ENCODE measurements at regions of chr18 and their contacts with region 1.

Region 1: DNA sequence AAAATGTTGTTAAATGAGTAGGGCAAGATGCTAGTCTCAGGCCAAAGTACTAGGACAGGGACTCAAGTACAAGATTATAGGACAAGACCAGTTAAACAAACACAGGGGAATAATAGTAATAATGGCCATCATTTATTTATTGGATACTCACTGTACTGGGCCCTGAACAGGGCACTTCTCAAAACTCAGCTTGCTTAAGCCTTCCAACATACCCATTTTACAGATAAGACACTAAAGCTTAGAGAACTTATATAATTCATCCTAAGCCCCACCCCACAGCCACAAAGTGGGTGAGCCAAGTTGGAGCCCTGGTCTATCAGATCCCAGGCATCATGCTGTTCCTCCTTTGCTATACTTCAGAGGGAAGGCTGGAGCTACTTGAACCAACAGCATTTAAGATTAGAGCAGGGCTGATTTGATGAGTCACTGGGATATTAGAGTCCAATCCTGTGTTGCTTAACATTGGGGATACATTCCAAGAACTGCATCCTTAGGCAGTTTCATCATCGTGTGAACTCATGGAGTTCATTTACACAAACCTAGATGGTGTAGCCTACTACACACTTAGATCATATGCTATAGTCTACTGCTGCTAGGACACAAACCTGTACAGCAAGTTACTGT is 153.6 kb downstream of the MTCL1 start:
- DNase-seq: peak; percentile 19 to 92
- H3K4me3 ChIP-seq: no peak overlapping the region
- H3K27ac ChIP-seq: peak overlapping the region; percentile 45
- H3K4me1 ChIP-seq: peaks cover 37% of the 10 kb centered on the region
- H3K27me3 ChIP-seq: no peaks in the 10 kb centered on the region
- CTCF ChIP-seq: no peak

Region 2: GRCh38 chr18:8367217-8367988 is 491.6 kb before region 1 on chr18:
- CTCF ChIA-PET with region 1: no interaction called
- POLR2A ChIA-PET with region 1: no interaction called
- intact Hi-C with region 1: no loop called
- DNase-seq: peak in 1 of 2 experiments; percentile 35
- H3K4me3 ChIP-seq: no peak overlapping the region; the same call in 1 of the 2 replicates
- H3K27ac ChIP-seq: no peak overlapping the region
- H3K4me1 ChIP-seq: no peaks in the 10 kb centered on the region
- H3K27me3 ChIP-seq: no peaks in the 10 kb centered on the region
- CTCF ChIP-seq: peak; percentile 21; the same call in 1 of the 2 replicates

Region 3: DNA sequence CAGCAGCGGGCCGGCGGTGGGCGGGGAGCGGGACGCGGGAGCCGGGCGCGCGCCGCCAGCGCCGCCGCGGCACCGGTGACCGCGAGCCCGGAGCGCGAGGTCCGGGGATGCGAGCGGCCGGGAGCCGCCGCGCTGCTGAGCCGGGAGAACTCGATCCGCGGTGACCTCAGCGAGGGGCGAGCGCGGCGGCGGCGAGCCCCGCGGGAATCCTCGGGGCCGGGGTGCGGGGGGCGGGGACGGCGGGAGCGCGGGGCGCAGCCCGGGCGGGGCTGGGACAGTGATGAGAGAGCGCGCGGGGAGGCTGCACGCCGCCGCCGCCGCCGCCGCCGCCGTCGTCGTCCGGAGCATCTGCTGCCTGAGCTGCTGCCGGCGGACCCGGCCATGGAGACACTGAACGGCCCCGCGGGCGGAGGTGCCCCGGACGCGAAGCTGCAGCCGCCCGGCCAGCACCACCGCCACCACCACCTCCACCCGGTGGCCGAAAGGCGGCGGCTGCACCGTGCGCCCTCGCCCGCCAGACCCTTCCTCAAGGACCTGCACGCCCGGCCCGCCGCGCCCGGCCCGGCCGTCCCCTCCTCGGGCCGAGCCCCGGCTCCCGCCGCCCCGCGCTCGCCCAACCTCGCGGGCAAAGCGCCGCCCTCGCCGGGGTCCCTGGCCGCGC is 153.6 kb before region 1 on chr18 and contains the start of gene MTCL1:
- CTCF ChIA-PET with region 1: no interaction called
- POLR2A ChIA-PET with region 1: no interaction called
- intact Hi-C with region 1: no loop called
- DNase-seq: peak; percentile 38 to 70
- H3K4me3 ChIP-seq: peak within 1 kb of the TSS; percentile 76
- H3K27ac ChIP-seq: peak within 1 kb of the TSS; percentile 51
- H3K4me1 ChIP-seq: peaks cover 21% of the 10 kb centered on the region
- H3K27me3 ChIP-seq: no peaks in the 10 kb centered on the region
- CTCF ChIP-seq: no peak
- total RNA-seq, gene MTCL1: 29.6 and 30.0 TPM in 2 replicates

Region 4: GRCh38 chr18:8844721-8845148 is 14.3 kb before region 1 on chr18:
- CTCF ChIA-PET with region 1: no interaction called
- POLR2A ChIA-PET with region 1: interaction called, 24 read pairs
- intact Hi-C with region 1: no loop called
- DNase-seq: no peak
- H3K4me3 ChIP-seq: no peak overlapping the region
- H3K27ac ChIP-seq: no peak overlapping the region
- H3K4me1 ChIP-seq: peaks cover 5% of the 10 kb centered on the region; the same call in 1 of the 2 replicates
- H3K27me3 ChIP-seq: no peaks in the 10 kb centered on the region
- CTCF ChIP-seq: no peak

Region 5: DNA sequence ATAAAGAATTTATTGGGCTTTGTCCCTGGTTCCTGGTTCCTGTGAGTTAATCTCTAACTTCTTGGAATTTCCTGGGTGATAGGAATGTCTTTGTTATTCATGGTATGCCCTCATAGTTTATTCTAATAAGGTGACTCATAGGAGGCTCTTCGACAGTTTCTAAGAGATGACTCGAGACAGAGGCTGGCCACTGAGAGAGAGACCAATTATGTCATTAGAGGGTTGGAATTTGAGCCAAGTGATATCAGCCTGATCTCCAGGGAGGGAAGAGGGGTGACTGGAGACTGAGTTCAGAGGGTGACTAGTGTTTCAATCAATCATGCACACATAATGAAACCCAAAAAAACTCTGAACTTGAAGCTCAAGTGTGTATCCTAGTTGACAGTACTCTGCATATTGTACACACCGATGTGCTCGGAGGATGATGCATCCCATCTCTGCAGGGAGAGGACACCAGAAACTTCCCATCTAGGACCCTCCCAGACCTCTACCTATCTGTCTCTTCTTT is 32.0 kb after region 1 on chr18:
- CTCF ChIA-PET with region 1: no interaction called
- POLR2A ChIA-PET with region 1: no interaction called
- intact Hi-C with region 1: loop called (anchors 1 kb)
- DNase-seq: peak; percentile 79 to 99
- H3K4me3 ChIP-seq: no peak overlapping the region
- H3K27ac ChIP-seq: peak overlapping the region; percentile 51
- H3K4me1 ChIP-seq: peaks cover 17% of the 10 kb centered on the region
- H3K27me3 ChIP-seq: no peaks in the 10 kb centered on the region
- CTCF ChIP-seq: no peak

Region 6: GRCh38 chr18:8948471-8949149 is 89.6 kb after region 1 on chr18:
- CTCF ChIA-PET with region 1: no interaction called
- POLR2A ChIA-PET with region 1: no interaction called
- intact Hi-C with region 1: loop called (anchors 5 kb)
- DNase-seq: peak; percentile 54 to 80
- H3K4me3 ChIP-seq: no peak overlapping the region
- H3K27ac ChIP-seq: peak overlapping the region; percentile 20; the same call in 1 of the 2 replicates
- H3K4me1 ChIP-seq: peaks cover 53% of the 10 kb centered on the region
- H3K27me3 ChIP-seq: no peaks in the 10 kb centered on the region
- CTCF ChIP-seq: no peak

Measured in PC-9 (cell line).